ENCODE measurements at regions of chr13 and their contacts with region 1.

Region 1: GRCh38 chr13:79480954-79481684 is at the start of gene NDFIP2:
- DNase-seq: peak; percentile 69 to 91 (median 84)
- ATAC-seq: peak; percentile 80
- H3K4me3 ChIP-seq: peak within 1 kb of the TSS; percentile 61 to 71
- H3K4me3 Mint-ChIP-seq: peak within 1 kb of the TSS; percentile 85
- H3K27ac ChIP-seq: peak within 1 kb of the TSS; percentile 29 to 33
- H3K27ac Mint-ChIP-seq: peak within 1 kb of the TSS; percentile 82
- H3K4me1 ChIP-seq: peaks cover 21% of the 10 kb centered on the region
- H3K4me1 Mint-ChIP-seq: peaks cover 29% of the 10 kb centered on the region
- H3K27me3 ChIP-seq: no peaks in the 10 kb centered on the region
- H3K27me3 Mint-ChIP-seq: no peaks in the 10 kb centered on the region
- CTCF ChIP-seq: no peak
- total RNA-seq, gene NDFIP2: 2.6 TPM

Region 2: DNA sequence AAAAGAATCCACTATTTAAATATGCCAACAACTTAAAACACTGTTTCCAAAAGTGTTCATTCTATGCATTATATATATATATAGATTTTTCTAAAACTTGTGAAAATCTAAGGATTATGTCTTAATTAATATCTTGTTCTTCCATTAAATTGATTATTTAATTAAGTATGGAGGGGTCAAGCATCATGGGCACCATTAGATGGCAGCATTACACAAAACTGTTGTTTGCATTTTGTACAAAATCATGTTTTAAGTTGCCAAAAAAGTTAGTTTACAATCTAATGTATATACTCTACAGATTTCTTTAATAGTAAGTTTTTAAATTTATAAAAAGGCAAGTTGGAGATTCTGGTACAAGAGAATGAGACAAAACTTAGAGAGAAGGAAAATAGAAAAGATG is 1349.3 kb before region 1 on chr13:
- CTCF ChIA-PET with region 1: no interaction called
- POLR2A ChIA-PET with region 1: no interaction called
- intact Hi-C with region 1: no loop called
- DNase-seq: no peak
- ATAC-seq: no peak
- H3K4me3 ChIP-seq: no peak overlapping the region
- H3K4me3 Mint-ChIP-seq: no peak overlapping the region
- H3K27ac ChIP-seq: no peak overlapping the region
- H3K27ac Mint-ChIP-seq: no peak overlapping the region
- H3K4me1 ChIP-seq: no peaks in the 10 kb centered on the region
- H3K4me1 Mint-ChIP-seq: no peaks in the 10 kb centered on the region
- H3K27me3 ChIP-seq: no peaks in the 10 kb centered on the region
- H3K27me3 Mint-ChIP-seq: peaks cover 5% of the 10 kb centered on the region
- CTCF ChIP-seq: no peak

Region 3: GRCh38 chr13:79307866-79308298 is 173.2 kb before region 1 on chr13:
- CTCF ChIA-PET with region 1: no interaction called
- POLR2A ChIA-PET with region 1: no interaction called
- intact Hi-C with region 1: no loop called
- DNase-seq: no peak
- ATAC-seq: no peak
- H3K4me3 ChIP-seq: no peak overlapping the region
- H3K4me3 Mint-ChIP-seq: no peak overlapping the region
- H3K27ac ChIP-seq: no peak overlapping the region
- H3K27ac Mint-ChIP-seq: no peak overlapping the region
- H3K4me1 ChIP-seq: no peaks in the 10 kb centered on the region
- H3K4me1 Mint-ChIP-seq: peaks cover 2% of the 10 kb centered on the region
- H3K27me3 ChIP-seq: no peaks in the 10 kb centered on the region
- H3K27me3 Mint-ChIP-seq: no peaks in the 10 kb centered on the region
- CTCF ChIP-seq: no peak

Region 4: DNA sequence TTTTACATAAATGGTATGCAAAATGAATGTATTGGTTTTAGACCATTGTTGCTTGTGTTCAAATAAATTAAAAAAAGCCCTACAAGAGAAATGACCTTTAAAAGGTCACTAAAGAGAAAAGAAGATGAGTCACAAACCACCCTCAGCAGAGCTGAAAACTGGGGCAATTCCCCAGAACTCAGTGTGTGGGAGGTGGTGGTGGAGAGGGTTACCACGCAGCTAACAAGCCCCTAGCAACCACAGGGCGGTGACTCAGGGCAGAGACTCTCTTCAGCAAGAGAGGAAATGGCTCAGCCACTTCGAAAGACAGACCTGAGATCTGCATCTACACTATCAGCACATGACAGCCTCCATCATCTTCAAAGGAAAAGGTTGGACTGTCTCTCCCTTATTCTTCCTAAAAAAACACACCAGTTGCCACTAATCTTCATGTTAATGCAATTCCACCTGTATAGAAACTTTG is 29.6 kb before region 1 on chr13:
- CTCF ChIA-PET with region 1: no interaction called
- POLR2A ChIA-PET with region 1: interaction called, 4 read pairs
- intact Hi-C with region 1: loop called (anchors 1 to 2 kb)
- DNase-seq: peak; percentile 60 to 93 (median 83)
- ATAC-seq: peak; percentile 99
- H3K4me3 ChIP-seq: no peak overlapping the region
- H3K4me3 Mint-ChIP-seq: peak overlapping the region; percentile 6
- H3K27ac ChIP-seq: peak overlapping the region in 1 of 2 experiments; percentile 22
- H3K27ac Mint-ChIP-seq: peak overlapping the region; percentile 88
- H3K4me1 ChIP-seq: peaks cover 26% of the 10 kb centered on the region
- H3K4me1 Mint-ChIP-seq: peaks cover 34% of the 10 kb centered on the region
- H3K27me3 ChIP-seq: no peaks in the 10 kb centered on the region
- H3K27me3 Mint-ChIP-seq: no peaks in the 10 kb centered on the region
- CTCF ChIP-seq: no peak

Region 5: DNA sequence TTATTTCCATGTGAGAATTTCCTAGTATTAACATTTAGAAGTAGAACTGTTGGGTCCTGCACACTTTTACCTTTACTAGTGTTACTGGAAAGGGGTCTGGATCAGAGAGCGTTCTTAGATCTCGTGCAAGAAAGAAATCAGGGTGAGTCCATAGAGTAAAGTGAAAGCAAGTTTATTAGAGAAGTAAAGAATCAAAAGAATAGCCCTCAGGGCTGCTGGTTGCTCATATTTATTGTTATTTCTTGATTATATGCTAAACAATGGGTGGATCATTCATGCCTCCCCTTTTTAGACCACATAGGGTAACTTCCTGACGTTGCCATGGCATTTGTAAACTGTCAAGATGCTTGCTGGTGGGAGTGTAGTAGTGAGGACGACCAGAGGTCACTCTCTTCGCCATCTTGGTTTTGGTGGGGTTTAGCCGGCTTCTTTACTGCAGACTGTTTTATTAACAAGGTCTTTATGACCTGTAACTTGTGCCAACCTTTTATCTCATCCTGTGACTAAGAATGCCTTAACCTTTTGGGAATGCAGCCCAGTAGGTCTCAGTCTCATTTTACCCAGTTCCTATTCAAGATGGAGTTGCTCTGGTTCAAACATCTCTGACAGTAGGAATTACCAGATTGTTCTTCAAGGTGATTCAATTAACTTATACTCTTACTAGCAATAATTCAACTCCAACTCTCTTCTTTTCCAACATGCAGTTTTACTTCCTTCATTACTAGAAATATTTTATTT is 27.3 kb after region 1 on chr13:
- CTCF ChIA-PET with region 1: no interaction called
- POLR2A ChIA-PET with region 1: no interaction called
- intact Hi-C with region 1: no loop called
- DNase-seq: no peak
- ATAC-seq: no peak
- H3K4me3 ChIP-seq: no peak overlapping the region
- H3K4me3 Mint-ChIP-seq: no peak overlapping the region
- H3K27ac ChIP-seq: no peak overlapping the region
- H3K27ac Mint-ChIP-seq: no peak overlapping the region
- H3K4me1 ChIP-seq: no peaks in the 10 kb centered on the region
- H3K4me1 Mint-ChIP-seq: peaks cover 2% of the 10 kb centered on the region
- H3K27me3 ChIP-seq: no peaks in the 10 kb centered on the region
- H3K27me3 Mint-ChIP-seq: no peaks in the 10 kb centered on the region
- CTCF ChIP-seq: no peak

Measured in CD8-positive, alpha-beta T cell (primary cell).